ENCODE measurements at regions of chr21 and their contacts with region 1.

Region 1: GRCh38 chr21:42833439-42833815 is 45.9 kb downstream of the WDR4 start:
- DNase-seq: peak; percentile 87
- H3K4me3 Mint-ChIP-seq: peak overlapping the region; percentile 69
- H3K27ac Mint-ChIP-seq: peak overlapping the region; percentile 51
- H3K4me1 Mint-ChIP-seq: peaks cover 25% of the 10 kb centered on the region
- H3K27me3 Mint-ChIP-seq: peaks cover 11% of the 10 kb centered on the region

Region 2: GRCh38 chr21:42467140-42467983 is 366.1 kb before region 1 on chr21:
- intact Hi-C with region 1: loop called (anchors 10 kb)
- DNase-seq: peak; percentile 75
- H3K4me3 Mint-ChIP-seq: no peak overlapping the region
- H3K27ac Mint-ChIP-seq: no peak overlapping the region
- H3K4me1 Mint-ChIP-seq: peaks cover 42% of the 10 kb centered on the region
- H3K27me3 Mint-ChIP-seq: peaks cover 5% of the 10 kb centered on the region

Region 3: GRCh38 chr21:42653231-42654061 is 180.0 kb before region 1 on chr21 and contains the start of gene PDE9A:
- intact Hi-C with region 1: loop called (anchors 2 kb)
- DNase-seq: peak; percentile 81
- H3K4me3 Mint-ChIP-seq: peak within 1 kb of the TSS; percentile 79
- H3K27ac Mint-ChIP-seq: peak within 1 kb of the TSS; percentile 77
- H3K4me1 Mint-ChIP-seq: peaks cover 12% of the 10 kb centered on the region
- H3K27me3 Mint-ChIP-seq: peaks cover 32% of the 10 kb centered on the region
- total RNA-seq, gene PDE9A: 10.7 and 13.1 TPM in 2 replicates

Measured in activated CD4-positive, alpha-beta T cell treated with anti-CD3 and anti-CD28 coated beads, Interleukin-2, amount 10 ng/mL, durations not matched to agents 24 days and 14 days (primary cell).